Cardiac septum (tissue), 1 donor: ENCODE measurements at regions of chr4 and their contacts with region 1.

Region 1: GRCh38 chr4:15238720-15239119 is 189.1 kb upstream of the C1QTNF7 start:
- DNase-seq: no peak

Region 2: DNA sequence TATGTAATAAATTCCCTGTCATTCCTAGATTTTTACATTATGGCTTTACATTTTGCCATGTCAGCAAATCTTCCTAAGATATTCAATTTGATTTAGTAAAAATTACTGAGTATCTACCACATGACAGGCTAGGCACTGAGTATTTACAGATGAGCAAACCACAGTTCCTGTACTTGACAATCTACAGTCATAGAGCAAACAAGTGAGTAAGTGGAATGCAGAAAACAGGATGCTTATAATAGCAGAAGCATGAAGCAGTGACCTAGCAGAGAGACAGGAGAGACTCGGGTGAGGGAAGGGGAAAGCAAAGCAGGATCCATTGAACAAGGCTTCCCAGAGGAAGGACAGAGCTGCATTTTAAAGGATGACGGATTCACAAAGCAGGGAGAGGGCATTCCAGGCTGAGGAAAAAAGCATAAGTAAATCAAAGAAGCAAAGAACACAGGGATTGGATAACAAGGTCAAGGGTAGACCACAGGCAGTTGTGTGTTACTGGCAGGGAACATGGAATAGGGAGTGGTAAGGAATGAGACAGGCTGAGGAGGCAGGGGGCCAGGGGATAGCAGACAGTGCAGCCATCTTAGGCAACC is 64.4 kb after region 1 on chr4:
- intact Hi-C with region 1: no loop called
- DNase-seq: no peak

Region 3: DNA sequence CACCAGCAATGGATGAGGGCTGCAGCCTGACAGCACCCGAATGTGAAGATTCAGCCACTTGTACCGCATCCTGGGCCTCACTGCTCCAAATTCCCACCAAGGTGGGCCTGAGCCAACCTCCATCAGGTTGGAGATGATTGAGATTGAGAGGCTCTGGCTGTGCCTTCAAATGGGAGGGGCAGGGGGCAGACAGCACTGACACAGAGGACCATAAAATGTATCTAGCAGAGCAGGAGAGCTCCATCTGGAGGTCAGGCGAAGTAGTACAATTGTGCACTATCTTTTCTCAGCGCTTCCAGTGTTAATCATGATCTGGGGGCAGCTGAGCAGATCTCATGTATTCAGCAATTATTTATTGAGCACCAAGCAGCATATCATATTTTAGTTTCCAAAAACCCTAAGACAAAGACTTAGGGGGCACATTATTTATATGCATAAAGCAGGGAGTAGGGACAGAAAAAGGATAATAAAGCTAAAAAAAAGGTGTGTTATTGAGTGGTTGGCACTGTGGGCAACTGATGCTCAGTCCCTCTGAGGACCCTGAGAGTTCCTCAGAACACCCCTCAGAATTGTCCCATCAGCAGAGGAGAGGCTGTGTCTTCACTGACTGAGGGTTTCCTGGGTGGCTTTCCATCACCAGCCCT is 157.6 kb after region 1 on chr4:
- intact Hi-C with region 1: loop called (anchors 5 kb)
- DNase-seq: no peak

Region 4: GRCh38 chr4:15457406-15458201 is 218.9 kb after region 1 on chr4:
- intact Hi-C with region 1: loop called (anchors 2 kb)
- DNase-seq: no peak